ENCODE measurements at regions of chrX and their contacts with region 1.

Region 1: DNA sequence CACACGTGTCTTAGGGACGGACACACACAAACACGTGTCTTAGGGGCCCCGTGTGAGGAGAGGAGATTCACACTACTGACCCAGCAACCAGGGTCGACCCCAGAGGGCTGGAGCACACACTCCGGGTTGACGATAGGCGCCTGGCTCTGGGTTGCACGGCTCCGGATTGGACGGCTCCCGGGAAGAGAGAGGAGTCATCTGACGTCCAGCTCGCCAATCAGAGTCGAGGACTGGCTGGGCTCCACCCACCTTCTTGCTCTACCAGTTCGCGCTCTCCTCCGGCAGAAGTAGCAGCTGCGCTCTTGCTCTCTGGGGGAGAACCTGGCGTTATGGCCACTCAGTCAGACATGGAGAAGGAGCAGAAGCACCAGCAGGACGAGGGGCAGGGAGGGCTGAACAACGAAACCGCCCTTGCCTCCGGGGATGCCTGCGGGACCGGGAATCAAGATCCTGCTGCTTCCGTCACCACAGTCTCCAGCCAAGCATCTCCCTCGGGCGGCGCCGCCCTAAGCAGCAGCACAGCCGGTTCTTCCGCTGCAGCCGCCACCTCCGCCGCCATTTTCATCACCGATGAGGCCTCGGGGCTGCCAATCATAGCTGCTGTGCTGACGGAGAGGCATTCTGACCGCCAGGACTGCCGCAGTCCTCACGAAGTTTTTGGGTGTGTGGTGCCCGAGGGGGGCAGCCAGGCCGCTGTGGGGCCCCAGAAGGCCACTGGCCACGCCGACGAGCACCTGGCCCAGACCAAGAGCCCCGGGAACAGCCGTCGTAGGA is 74.3 kb downstream of the NUDT10 start:
- DNase-seq: no peak

Region 2: DNA sequence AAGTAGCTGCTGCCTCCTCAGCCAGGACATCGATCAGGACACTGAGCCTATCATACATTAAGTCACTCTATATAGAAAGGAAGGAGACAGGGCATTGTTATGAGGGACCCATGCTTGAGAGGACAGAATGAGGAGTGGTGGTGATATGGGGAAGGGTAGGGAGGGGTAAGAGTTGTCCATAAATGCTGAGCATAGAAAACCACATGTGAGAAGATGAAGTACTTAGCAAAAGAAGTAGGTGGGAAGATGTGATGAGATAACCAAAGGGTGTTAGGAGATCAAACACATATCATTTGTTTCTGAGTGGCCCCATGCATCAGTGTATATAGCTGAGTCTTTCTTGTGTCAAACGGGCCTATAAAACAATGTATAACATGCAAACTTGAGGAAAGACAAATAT is 1020.4 kb before region 1 on chrX:
- intact Hi-C with region 1: loop called in 1 of 2 experiments (anchors 5 kb)
- DNase-seq: no peak

Region 3: DNA sequence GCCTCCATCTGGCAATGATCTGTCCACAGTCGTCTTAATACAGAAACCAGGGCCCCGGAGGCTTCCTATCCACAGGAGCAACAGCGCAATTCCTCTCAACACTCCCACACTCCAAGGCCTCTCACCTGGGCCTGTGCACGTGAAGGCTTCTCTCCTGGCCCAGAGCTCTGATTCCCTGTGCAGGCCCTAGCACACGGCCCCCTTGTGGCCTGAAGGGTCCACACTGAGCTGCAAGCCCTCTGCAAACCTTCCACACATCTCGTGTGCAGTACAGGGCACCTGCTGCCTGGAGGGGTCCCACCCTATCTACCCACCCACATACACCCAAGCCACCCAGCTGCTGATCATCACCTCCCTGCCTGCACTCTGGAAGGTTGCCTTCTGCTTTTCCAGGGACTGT is 224.3 kb before region 1 on chrX:
- intact Hi-C with region 1: no loop called
- DNase-seq: no peak

Region 4: GRCh38 chrX:51571874-51572273 is 165.0 kb after region 1 on chrX:
- intact Hi-C with region 1: no loop called
- DNase-seq: no peak

Region 5: DNA sequence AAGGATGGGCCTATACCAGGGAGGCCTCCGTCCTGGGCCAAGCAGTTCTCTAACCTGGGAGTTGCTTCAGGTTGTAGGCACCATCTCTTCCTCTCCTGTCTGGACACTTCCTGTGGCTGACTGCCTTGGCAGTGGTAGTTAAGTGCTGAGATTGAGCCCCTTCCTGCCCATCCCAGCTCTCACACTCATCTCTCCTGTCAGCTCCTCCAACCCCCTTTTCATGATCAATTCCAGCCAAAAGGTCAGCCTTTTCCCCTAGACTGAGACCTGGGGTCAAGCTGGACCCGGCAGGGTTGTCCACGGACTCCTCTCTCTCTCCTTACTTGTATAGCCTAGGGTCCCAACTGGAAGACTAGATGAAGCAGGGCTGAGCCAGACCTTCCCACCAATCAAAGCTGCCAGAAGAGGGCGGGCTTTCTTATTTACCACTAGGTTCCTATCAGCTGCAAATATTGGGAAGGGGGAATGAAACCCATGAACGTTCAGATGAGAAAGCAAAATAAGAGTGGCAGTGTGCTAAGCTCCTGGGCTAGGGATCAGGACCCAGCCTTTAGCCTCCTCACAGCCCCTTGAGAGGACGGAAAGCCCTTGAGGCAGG is 1783.6 kb after region 1 on chrX:
- intact Hi-C with region 1: no loop called
- DNase-seq: no peak